ENCODE measurements at regions of chr5 and their contacts with region 1.

Region 1: DNA sequence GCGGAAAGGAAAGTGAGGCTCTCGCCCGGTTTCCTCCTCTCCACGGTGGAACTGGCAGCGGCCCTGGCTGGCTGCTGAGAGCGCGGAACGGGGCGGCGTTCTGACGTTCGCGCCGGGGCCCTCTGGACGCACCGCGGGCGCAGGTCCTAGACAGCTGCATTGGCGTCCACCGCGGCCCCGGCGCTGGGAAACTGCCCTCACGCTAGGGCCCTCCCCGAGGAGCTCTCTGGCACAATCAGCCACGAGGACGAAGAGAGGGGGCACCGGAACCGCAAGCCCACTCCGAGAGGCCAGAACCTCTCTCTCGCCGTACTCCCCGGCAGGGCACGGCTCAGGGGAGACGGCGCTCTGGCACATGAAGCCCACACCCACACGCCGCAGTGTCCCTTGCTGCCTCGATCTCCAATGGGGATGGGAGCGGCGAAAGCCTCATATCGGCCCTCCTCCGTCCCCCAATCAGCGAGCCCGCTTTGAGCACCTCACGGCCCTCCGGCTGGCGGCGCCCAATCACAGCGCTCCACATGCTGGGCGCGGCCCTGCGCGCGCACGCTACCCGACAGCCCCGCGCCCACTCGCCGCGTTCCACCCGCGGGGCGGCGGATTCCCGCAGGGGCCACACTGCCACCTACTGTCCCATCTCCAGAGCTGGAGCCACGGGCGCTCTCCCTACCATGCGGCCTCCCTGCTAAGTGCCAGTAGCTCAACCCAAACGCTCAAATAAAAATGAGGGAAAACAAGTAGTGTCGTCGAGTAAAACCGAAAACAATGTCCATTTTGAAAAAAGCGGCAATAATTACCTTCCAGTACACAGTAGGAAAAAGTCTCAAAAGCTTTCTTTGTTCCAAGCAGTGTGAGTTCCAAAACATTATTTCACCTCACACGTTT is 11.8 kb downstream of the MRPS27 start:
- DNase-seq: peak; percentile 89 to 98 (median 94)
- ATAC-seq: peak; percentile 97
- H3K4me3 ChIP-seq: peak overlapping the region; percentile 80 to 96
- H3K4me3 Mint-ChIP-seq: peak overlapping the region; percentile 93
- H3K27ac ChIP-seq: peak overlapping the region; percentile 91 to 95
- H3K27ac Mint-ChIP-seq: peak overlapping the region; percentile 96
- H3K4me1 ChIP-seq: peaks cover 10% of the 10 kb centered on the region
- H3K4me1 Mint-ChIP-seq: peaks cover 31% of the 10 kb centered on the region
- H3K27me3 ChIP-seq: no peaks in the 10 kb centered on the region
- H3K27me3 Mint-ChIP-seq: no peaks in the 10 kb centered on the region
- CTCF ChIP-seq: peak; percentile 83

Region 2: GRCh38 chr5:71455427-71456361 is 852.5 kb before region 1 on chr5 and contains the start of gene BDP1:
- CTCF ChIA-PET with region 1: no interaction called
- POLR2A ChIA-PET with region 1: no interaction called
- intact Hi-C with region 1: loop called in 1 of 2 experiments (anchors 5 kb)
- DNase-seq: peak; percentile 93 to 99 (median 97)
- ATAC-seq: peak; percentile 87
- H3K4me3 ChIP-seq: peak within 1 kb of the TSS; percentile 81 to 84
- H3K4me3 Mint-ChIP-seq: peak within 1 kb of the TSS; percentile 100
- H3K27ac ChIP-seq: peak within 1 kb of the TSS; percentile 90 to 92
- H3K27ac Mint-ChIP-seq: peak within 1 kb of the TSS; percentile 100
- H3K4me1 ChIP-seq: peaks cover 19% of the 10 kb centered on the region
- H3K4me1 Mint-ChIP-seq: peaks cover 29% of the 10 kb centered on the region
- H3K27me3 ChIP-seq: peaks cover 0 to 10% of the 10 kb centered on the region in 2 experiments
- H3K27me3 Mint-ChIP-seq: peaks cover 2% of the 10 kb centered on the region
- CTCF ChIP-seq: peak; percentile 48
- total RNA-seq, gene BDP1: 29.6 to 33.2 TPM

Region 3: GRCh38 chr5:71782771-71783770 is 525.1 kb before region 1 on chr5:
- CTCF ChIA-PET with region 1: no interaction called
- POLR2A ChIA-PET with region 1: no interaction called
- intact Hi-C with region 1: loop called in 1 of 2 experiments (anchors 5 kb)
- DNase-seq: peak in 5 of 9 experiments; percentile 14 to 38 (median 23)
- ATAC-seq: peak; percentile 51
- H3K4me3 ChIP-seq: no peak overlapping the region
- H3K4me3 Mint-ChIP-seq: peak overlapping the region; percentile 58
- H3K27ac ChIP-seq: no peak overlapping the region
- H3K27ac Mint-ChIP-seq: no peak overlapping the region
- H3K4me1 ChIP-seq: peaks cover 11% of the 10 kb centered on the region
- H3K4me1 Mint-ChIP-seq: peaks cover 17% of the 10 kb centered on the region
- H3K27me3 ChIP-seq: no peaks in the 10 kb centered on the region
- H3K27me3 Mint-ChIP-seq: peaks cover 16% of the 10 kb centered on the region
- CTCF ChIP-seq: peak; percentile 32

Region 4: GRCh38 chr5:71810456-71811195 is 497.6 kb before region 1 on chr5:
- CTCF ChIA-PET with region 1: no interaction called
- POLR2A ChIA-PET with region 1: no interaction called
- intact Hi-C with region 1: no loop called
- DNase-seq: no peak
- ATAC-seq: no peak
- H3K4me3 ChIP-seq: no peak overlapping the region
- H3K4me3 Mint-ChIP-seq: no peak overlapping the region
- H3K27ac ChIP-seq: no peak overlapping the region
- H3K27ac Mint-ChIP-seq: no peak overlapping the region
- H3K4me1 ChIP-seq: no peaks in the 10 kb centered on the region
- H3K4me1 Mint-ChIP-seq: peaks cover 2% of the 10 kb centered on the region
- H3K27me3 ChIP-seq: no peaks in the 10 kb centered on the region
- H3K27me3 Mint-ChIP-seq: peaks cover 17% of the 10 kb centered on the region
- CTCF ChIP-seq: no peak

Region 5: GRCh38 chr5:72234265-72234700 is 73.9 kb before region 1 on chr5:
- CTCF ChIA-PET with region 1: interaction called, 4 read pairs
- POLR2A ChIA-PET with region 1: interaction called, 7 read pairs
- intact Hi-C with region 1: loop called (anchors 1 to 5 kb)
- DNase-seq: peak in 5 of 9 experiments; percentile 21 to 89 (median 29)
- ATAC-seq: peak; percentile 86
- H3K4me3 ChIP-seq: no peak overlapping the region
- H3K4me3 Mint-ChIP-seq: no peak overlapping the region
- H3K27ac ChIP-seq: no peak overlapping the region
- H3K27ac Mint-ChIP-seq: no peak overlapping the region
- H3K4me1 ChIP-seq: peaks cover 23% of the 10 kb centered on the region
- H3K4me1 Mint-ChIP-seq: peaks cover 52% of the 10 kb centered on the region
- H3K27me3 ChIP-seq: no peaks in the 10 kb centered on the region
- H3K27me3 Mint-ChIP-seq: no peaks in the 10 kb centered on the region
- CTCF ChIP-seq: no peak

Region 6: GRCh38 chr5:72816311-72817145 is 508.3 kb after region 1 on chr5 and contains the start of gene TNPO1:
- CTCF ChIA-PET with region 1: no interaction called
- POLR2A ChIA-PET with region 1: no interaction called
- intact Hi-C with region 1: loop called in 1 of 2 experiments (anchors 2 kb)
- DNase-seq: peak; percentile 75 to 92 (median 82)
- ATAC-seq: peak; percentile 73
- H3K4me3 ChIP-seq: peak within 1 kb of the TSS; percentile 66 to 84
- H3K4me3 Mint-ChIP-seq: peak within 1 kb of the TSS; percentile 90
- H3K27ac ChIP-seq: peak within 1 kb of the TSS; percentile 88 to 91
- H3K27ac Mint-ChIP-seq: peak within 1 kb of the TSS; percentile 92
- H3K4me1 ChIP-seq: peaks cover 16% of the 10 kb centered on the region
- H3K4me1 Mint-ChIP-seq: peaks cover 22% of the 10 kb centered on the region
- H3K27me3 ChIP-seq: peaks cover 0 to 4% of the 10 kb centered on the region in 2 experiments
- H3K27me3 Mint-ChIP-seq: peaks cover 13% of the 10 kb centered on the region
- CTCF ChIP-seq: no peak
- total RNA-seq, gene TNPO1: 76.5 to 96.5 TPM

Region 7: DNA sequence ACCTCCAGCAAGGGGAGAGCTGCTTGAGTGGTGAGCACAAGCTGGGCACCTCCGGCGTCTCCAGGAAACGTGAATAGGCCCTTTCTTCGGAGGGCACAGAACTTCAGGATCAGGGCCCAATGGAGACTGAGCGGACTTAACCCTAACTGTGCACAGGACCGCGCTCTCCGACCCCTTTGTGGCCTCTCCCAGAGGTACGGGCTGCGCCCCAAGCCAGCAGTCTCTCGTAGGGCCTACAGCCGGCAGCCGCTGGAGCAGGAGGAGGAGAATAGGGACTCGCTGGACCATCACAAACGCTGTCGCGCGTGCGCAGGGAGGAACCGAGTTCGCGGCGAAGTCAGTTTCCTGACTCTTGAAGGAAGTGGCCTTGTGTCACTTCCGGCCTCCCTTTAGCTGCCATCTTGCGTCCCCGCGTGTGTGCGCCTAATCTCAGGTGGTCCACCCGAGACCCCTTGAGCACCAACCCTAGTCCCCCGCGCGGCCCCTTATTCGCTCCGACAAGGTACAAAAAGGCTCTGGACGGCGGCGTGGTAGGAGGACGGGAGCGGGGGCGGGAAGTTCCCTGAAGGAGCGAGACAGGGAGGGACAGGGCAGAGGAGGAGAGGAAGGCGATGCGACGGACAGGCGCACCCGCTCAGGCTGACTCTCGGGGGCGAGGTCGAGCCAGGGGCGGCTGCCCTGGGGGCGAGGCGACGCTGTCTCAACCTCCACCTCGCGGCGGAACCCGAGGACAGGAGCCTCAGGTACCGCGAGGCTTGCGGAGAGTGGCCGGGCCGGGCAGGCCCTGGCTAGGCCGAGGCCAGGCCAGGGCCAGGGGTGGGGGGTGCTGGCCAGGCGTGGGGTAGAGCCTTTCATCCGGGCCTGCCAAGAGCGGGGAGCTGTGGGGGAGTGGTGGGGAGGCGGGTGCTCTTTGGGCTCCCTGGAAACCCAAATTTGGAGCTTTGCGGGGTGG is 1190.1 kb after region 1 on chr5 and contains the start of gene BTF3:
- CTCF ChIA-PET with region 1: no interaction called
- POLR2A ChIA-PET with region 1: no interaction called
- intact Hi-C with region 1: loop called (anchors 5 kb)
- DNase-seq: peak; percentile 77 to 97 (median 93)
- ATAC-seq: peak; percentile 89
- H3K4me3 ChIP-seq: peak within 1 kb of the TSS; percentile 95 to 96
- H3K4me3 Mint-ChIP-seq: peak within 1 kb of the TSS; percentile 97
- H3K27ac ChIP-seq: peak within 1 kb of the TSS; percentile 97 to 99
- H3K27ac Mint-ChIP-seq: peak within 1 kb of the TSS; percentile 100
- H3K4me1 ChIP-seq: peaks cover 38% of the 10 kb centered on the region
- H3K4me1 Mint-ChIP-seq: peaks cover 50% of the 10 kb centered on the region
- H3K27me3 ChIP-seq: no peaks in the 10 kb centered on the region
- H3K27me3 Mint-ChIP-seq: peaks cover 5% of the 10 kb centered on the region
- CTCF ChIP-seq: no peak
- total RNA-seq, gene BTF3: 808 to 815 TPM